CD4-positive, alpha-beta memory T cell (primary cell): ENCODE measurements at regions of chr6 and their contacts with region 1.

Region 1: DNA sequence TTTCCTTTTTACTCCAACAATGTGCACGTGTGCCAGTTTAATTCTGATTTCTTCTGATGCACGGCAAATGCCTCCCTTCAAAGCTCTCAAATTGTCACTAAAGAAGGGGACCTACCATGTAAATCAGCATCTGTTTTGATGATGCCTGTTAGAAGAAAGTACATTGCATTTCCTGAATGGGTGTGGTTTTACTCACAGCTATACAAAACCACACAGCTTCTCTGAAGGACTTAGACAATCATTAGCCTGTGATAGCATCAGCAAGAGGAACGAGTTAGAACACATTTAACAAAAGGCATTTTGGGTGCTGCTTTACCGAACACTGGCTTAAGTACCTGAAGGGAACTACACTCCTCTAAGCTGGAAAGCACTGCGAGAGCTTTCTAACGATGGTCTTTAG is 109.4 kb downstream of the ATXN1 start:
- DNase-seq: peak; percentile 65 to 83 (median 79)
- H3K4me3 ChIP-seq: peak overlapping the region in 1 of 2 donors; percentile 6
- H3K4me3 Mint-ChIP-seq: peak overlapping the region; percentile 39 to 78 (median 70)
- H3K27ac ChIP-seq: peak overlapping the region; percentile 38
- H3K27ac Mint-ChIP-seq: peak overlapping the region; percentile 89 to 99 (median 93)
- H3K4me1 ChIP-seq: peaks cover 63% of the 10 kb centered on the region
- H3K4me1 Mint-ChIP-seq: peaks cover 46 to 66% (median 54%) of the 10 kb centered on the region in 4 donors
- H3K27me3 ChIP-seq: no peaks in the 10 kb centered on the region
- H3K27me3 Mint-ChIP-seq: no peaks in the 10 kb centered on the region

Region 2: DNA sequence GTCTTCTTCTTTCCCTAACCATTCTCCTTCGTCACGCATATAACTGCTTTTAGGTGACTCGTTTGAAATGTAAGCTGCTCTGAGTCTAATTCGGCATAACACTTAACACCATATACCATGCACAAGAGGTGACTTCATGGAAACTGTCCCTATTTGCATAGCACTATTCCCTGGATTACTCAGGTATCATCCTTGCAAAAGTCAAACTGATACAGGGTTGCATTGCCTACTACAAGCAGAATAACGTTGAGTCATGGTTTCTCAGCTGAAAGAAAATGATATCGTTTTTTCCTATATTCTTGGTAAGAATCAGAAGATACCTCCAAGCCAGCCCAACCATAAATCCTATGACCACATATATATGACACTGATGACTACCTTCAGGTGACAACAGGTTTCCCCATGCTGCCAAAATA is 118.1 kb before region 1 on chr6:
- CTCF ChIA-PET with region 1: no interaction called
- POLR2A ChIA-PET with region 1: no interaction called
- intact Hi-C with region 1: no loop called
- DNase-seq: no peak
- H3K4me3 ChIP-seq: no peak overlapping the region
- H3K4me3 Mint-ChIP-seq: no peak overlapping the region
- H3K27ac ChIP-seq: no peak overlapping the region
- H3K27ac Mint-ChIP-seq: no peak overlapping the region
- H3K4me1 ChIP-seq: no peaks in the 10 kb centered on the region
- H3K4me1 Mint-ChIP-seq: peaks cover 7 to 24% (median 23%) of the 10 kb centered on the region in 4 donors
- H3K27me3 ChIP-seq: no peaks in the 10 kb centered on the region
- H3K27me3 Mint-ChIP-seq: no peaks in the 10 kb centered on the region

Region 3: DNA sequence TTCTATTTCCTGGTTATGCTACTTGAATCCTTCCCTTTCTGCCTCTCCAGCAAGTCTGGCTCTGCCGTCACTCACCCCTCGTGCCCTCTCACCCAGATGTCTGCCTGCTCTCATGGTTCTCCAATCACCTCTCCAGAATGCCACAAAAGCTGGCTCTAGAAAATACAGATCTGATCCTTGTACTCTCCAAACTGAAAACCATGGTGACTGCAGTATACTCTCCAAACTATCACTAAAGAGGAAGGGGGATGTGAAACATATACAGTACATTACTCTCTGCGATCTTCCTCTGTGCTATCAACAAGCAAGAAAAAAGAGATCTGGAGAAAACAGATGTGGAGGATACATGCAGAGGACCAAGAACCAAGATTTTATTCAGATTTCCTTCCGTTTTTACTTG is 18.3 kb after region 1 on chr6:
- CTCF ChIA-PET with region 1: interaction called, 3 read pairs
- POLR2A ChIA-PET with region 1: interaction called, 7 read pairs
- intact Hi-C with region 1: loop called (anchors 2 kb)
- DNase-seq: no peak
- H3K4me3 ChIP-seq: no peak overlapping the region
- H3K4me3 Mint-ChIP-seq: peak overlapping the region; percentile 21 to 91 (median 76)
- H3K27ac ChIP-seq: peak overlapping the region; percentile 35
- H3K27ac Mint-ChIP-seq: peak overlapping the region; percentile 74 to 96 (median 92)
- H3K4me1 ChIP-seq: peaks cover 61% of the 10 kb centered on the region
- H3K4me1 Mint-ChIP-seq: peaks cover 50 to 69% (median 55%) of the 10 kb centered on the region in 4 donors
- H3K27me3 ChIP-seq: no peaks in the 10 kb centered on the region
- H3K27me3 Mint-ChIP-seq: no peaks in the 10 kb centered on the region

Region 4: GRCh38 chr6:16684896-16685554 is 33.2 kb after region 1 on chr6:
- CTCF ChIA-PET with region 1: interaction called, 3 read pairs
- POLR2A ChIA-PET with region 1: interaction called, 8 read pairs
- intact Hi-C with region 1: loop called (anchors 5 kb)
- DNase-seq: peak in 4 of 5 donors; percentile 42 to 91 (median 53)
- H3K4me3 ChIP-seq: no peak overlapping the region
- H3K4me3 Mint-ChIP-seq: peak overlapping the region in 2 of 8 donors; percentile 13 to 22
- H3K27ac ChIP-seq: no peak overlapping the region
- H3K27ac Mint-ChIP-seq: peak overlapping the region in 6 of 7 donors; percentile 24 to 74 (median 47)
- H3K4me1 ChIP-seq: peaks cover 62% of the 10 kb centered on the region
- H3K4me1 Mint-ChIP-seq: peaks cover 35 to 70% (median 59%) of the 10 kb centered on the region in 4 donors
- H3K27me3 ChIP-seq: no peaks in the 10 kb centered on the region
- H3K27me3 Mint-ChIP-seq: no peaks in the 10 kb centered on the region

Region 5: DNA sequence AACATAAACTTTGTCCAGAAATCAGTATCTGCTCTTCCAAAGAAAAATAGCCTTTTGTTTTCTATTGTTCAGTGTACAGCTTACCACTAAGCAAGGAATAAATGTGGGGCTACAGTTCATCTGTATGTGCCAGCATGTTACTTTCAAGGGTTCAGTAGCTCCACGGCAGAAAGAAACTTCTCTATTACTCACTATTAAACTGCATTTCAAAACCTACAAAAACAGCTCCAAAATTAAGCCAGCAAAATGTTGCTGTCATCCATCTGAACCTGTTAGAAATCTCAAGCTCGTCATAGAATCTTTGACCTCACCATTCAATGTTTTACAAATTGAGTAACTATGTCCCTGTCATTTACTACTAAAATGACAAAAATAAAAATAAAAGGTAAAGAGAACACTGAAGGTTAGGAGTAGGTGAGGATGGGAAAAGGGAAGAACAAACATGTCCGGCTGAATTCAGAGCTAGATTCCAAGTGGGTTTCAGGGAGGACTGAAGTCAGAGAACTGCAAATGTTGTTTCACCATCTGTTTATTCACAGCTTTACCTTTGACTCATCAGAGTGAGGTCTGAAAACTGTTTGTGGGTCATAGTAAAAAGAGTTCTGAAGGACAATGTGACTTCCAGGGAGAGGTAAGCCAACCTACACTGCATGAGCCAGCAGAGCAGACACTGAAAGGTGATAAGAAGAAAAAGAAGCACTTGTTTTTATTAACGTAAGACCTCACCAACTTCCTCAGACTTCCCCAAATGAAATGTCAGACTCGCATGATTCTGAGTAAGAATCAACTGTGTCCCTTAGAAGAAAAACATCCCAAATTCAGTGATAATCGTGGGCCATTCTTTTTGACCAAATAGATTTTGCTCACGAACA is 47.4 kb after region 1 on chr6:
- CTCF ChIA-PET with region 1: interaction called, 10 read pairs
- POLR2A ChIA-PET with region 1: interaction called, 38 read pairs
- intact Hi-C with region 1: no loop called
- DNase-seq: peak in 2 of 5 donors; percentile 33 to 74
- H3K4me3 ChIP-seq: peak overlapping the region in 1 of 2 donors; percentile 61
- H3K4me3 Mint-ChIP-seq: peak overlapping the region; percentile 86 to 94 (median 92)
- H3K27ac ChIP-seq: peak overlapping the region; percentile 69
- H3K27ac Mint-ChIP-seq: peak overlapping the region; percentile 92 to 97 (median 96)
- H3K4me1 ChIP-seq: peaks cover 78% of the 10 kb centered on the region
- H3K4me1 Mint-ChIP-seq: peaks cover 58 to 83% (median 72%) of the 10 kb centered on the region in 4 donors
- H3K27me3 ChIP-seq: no peaks in the 10 kb centered on the region
- H3K27me3 Mint-ChIP-seq: no peaks in the 10 kb centered on the region